Activated CD8-positive, alpha-beta T cell treated with anti-CD3 and anti-CD28 coated beads for 36 hours (primary cell): ENCODE measurements at regions of chr14 and their contacts with region 1.

Region 1: GRCh38 chr14:74362361-74362915 is 14.2 kb downstream of the VRTN start:
- DNase-seq: peak; percentile 80
- ATAC-seq: peak; percentile 80
- H3K4me3 Mint-ChIP-seq: no peak overlapping the region
- H3K27ac Mint-ChIP-seq: no peak overlapping the region
- H3K4me1 Mint-ChIP-seq: no peaks in the 10 kb centered on the region
- H3K27me3 Mint-ChIP-seq: peaks cover 12% of the 10 kb centered on the region
- CTCF ChIP-seq: peak; percentile 98

Region 2: GRCh38 chr14:74444866-74445265 is 82.4 kb after region 1 on chr14:
- CTCF ChIA-PET with region 1: no interaction called
- POLR2A ChIA-PET with region 1: no interaction called
- intact Hi-C with region 1: no loop called
- DNase-seq: no peak
- ATAC-seq: no peak
- H3K4me3 Mint-ChIP-seq: no peak overlapping the region
- H3K27ac Mint-ChIP-seq: no peak overlapping the region
- H3K4me1 Mint-ChIP-seq: no peaks in the 10 kb centered on the region
- H3K27me3 Mint-ChIP-seq: peaks cover 12% of the 10 kb centered on the region
- CTCF ChIP-seq: no peak

Region 3: DNA sequence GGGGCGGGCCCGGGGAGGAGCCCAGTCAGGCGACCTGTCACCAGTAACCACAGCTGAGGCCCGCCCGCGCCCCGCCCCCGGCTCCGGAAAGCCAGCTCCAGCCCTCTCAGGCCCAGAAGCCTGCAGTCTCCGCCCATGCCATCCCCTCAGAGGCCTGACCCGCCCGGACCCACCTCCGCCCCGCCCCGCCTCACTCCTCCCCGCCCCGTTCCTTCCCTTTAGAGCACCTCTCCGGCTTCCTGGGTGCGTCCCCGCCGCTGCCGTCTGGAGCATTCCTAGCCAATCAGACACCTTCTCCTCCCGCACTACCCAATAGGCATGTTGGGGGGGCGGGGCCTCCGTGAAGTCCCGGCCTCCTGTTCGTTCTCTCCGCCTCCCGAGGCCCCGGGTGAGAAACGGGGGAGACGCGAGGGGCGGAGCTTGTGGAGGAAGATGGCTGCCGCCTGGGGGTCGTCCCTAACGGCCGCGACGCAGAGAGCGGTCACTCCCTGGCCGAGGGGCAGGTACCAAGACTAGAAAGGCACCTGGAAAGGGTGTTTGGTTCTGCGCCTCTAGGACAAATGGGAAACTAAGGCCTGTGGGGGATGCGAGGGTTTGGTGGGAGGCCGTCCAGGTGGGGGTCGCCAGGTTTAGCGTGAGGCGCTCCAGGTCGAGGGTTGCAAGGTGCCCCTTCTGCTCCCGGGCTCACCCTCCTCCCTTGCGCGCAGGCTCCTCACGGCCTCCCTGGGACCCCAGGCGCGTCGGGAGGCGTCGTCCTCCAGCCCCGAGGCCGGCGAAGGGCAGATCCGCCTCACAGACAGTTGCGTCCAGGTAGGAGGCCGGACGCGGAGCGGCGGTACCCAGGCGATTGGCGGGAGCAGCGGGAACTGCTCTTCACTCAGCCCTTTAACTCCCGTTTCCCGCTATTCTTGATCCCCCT is 131.2 kb after region 1 on chr14 and contains the start of gene ISCA2:
- CTCF ChIA-PET with region 1: interaction called, 4 read pairs
- POLR2A ChIA-PET with region 1: no interaction called
- intact Hi-C with region 1: loop called (anchors 2 kb)
- DNase-seq: peak; percentile 100
- ATAC-seq: peak; percentile 96
- H3K4me3 Mint-ChIP-seq: no peak within 1 kb of the TSS
- H3K27ac Mint-ChIP-seq: peak within 1 kb of the TSS; percentile 89
- H3K4me1 Mint-ChIP-seq: peaks cover 24% of the 10 kb centered on the region
- H3K27me3 Mint-ChIP-seq: no peaks in the 10 kb centered on the region
- CTCF ChIP-seq: no peak
- total RNA-seq, gene ISCA2: 29.1 to 31.7 TPM